Panc1 (cell line): ENCODE measurements at regions of chr12 and their contacts with region 1.

Region 1: DNA sequence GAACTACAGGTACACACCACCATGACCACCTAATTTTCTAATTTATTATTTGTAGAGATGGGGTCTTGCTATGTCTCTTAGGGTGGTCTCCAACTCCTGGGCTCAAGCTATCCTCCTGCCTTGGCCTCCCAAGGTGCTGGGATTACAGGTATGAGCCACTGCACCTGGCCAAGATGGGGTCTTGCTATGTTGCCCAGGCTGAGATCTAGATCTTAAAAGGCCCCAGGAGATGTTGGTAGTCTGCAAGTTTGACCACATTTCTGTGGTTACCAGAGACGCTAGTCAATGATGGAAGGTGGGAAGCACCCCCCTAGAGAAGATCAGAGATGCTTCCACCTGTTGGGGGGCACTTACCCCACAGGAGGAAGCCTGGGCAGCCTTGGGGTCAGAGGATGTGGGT is 34.7 kb downstream of the FOXN4 start:
- DNase-seq: no peak
- ATAC-seq: no peak
- H3K4me3 ChIP-seq: no peak overlapping the region
- H3K27ac ChIP-seq: no peak overlapping the region
- H3K4me1 ChIP-seq: no peaks in the 10 kb centered on the region
- H3K27me3 ChIP-seq: no peaks in the 10 kb centered on the region
- CTCF ChIP-seq: no peak

Region 2: DNA sequence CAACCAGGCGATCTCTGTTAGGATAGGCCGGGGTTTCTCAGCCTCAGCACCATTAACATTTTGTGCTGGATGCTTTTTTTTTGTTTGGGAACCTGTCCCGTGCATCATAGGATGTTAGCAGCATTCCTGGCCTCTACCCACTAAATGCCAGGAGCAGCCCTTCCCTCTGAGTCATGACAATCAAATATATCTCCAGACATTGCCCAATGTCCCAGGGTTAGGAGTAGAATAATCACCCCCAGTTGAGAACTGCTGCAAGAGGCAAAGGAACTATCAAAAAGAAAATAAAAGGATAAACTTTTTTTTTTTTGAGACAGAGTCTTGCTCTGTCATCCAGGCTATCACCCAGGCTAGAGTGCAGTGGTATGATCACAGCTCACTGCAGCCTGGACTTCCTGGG is 82.0 kb before region 1 on chr12:
- CTCF ChIA-PET with region 1: interaction called, 12 read pairs
- POLR2A ChIA-PET with region 1: no interaction called
- in situ Hi-C with region 1: no loop called
- intact Hi-C with region 1: no loop called
- DNase-seq: no peak
- ATAC-seq: no peak
- H3K4me3 ChIP-seq: no peak overlapping the region
- H3K27ac ChIP-seq: no peak overlapping the region
- H3K4me1 ChIP-seq: no peaks in the 10 kb centered on the region
- H3K27me3 ChIP-seq: no peaks in the 10 kb centered on the region
- CTCF ChIP-seq: no peak

Region 3: DNA sequence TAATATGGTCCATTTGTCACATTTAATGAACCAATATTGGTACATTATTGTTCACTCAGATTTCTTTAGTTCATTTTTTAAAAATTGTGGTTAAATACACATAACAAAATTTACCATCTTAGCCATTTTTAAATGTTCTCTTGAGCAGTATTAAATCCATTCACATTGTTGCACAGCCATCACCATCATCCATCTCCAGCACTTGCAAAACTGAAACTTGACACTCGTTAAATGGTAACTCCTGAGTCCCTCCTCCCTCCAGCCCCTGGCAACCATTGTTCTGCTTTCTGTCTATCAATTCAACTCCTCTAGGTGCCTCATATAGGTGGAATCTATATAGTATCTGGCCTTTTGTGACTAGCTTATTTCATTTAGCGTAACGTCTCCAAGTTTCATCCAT is 71.6 kb before region 1 on chr12:
- CTCF ChIA-PET with region 1: no interaction called
- POLR2A ChIA-PET with region 1: no interaction called
- in situ Hi-C with region 1: no loop called
- intact Hi-C with region 1: no loop called
- DNase-seq: no peak
- ATAC-seq: no peak
- H3K4me3 ChIP-seq: no peak overlapping the region
- H3K27ac ChIP-seq: no peak overlapping the region
- H3K4me1 ChIP-seq: no peaks in the 10 kb centered on the region
- H3K27me3 ChIP-seq: no peaks in the 10 kb centered on the region
- CTCF ChIP-seq: no peak

Region 4: GRCh38 chr12:109291521-109292341 is 17.4 kb after region 1 on chr12:
- CTCF ChIA-PET with region 1: no interaction called
- POLR2A ChIA-PET with region 1: no interaction called
- in situ Hi-C with region 1: no loop called
- intact Hi-C with region 1: no loop called
- DNase-seq: no peak
- ATAC-seq: peak; percentile 43
- H3K4me3 ChIP-seq: no peak overlapping the region
- H3K27ac ChIP-seq: no peak overlapping the region
- H3K4me1 ChIP-seq: peaks cover 3% of the 10 kb centered on the region; the same call in 1 of the 2 replicates
- H3K27me3 ChIP-seq: no peaks in the 10 kb centered on the region
- CTCF ChIP-seq: no peak

Region 5: GRCh38 chr12:109302358-109302757 is 28.0 kb after region 1 on chr12:
- CTCF ChIA-PET with region 1: no interaction called
- POLR2A ChIA-PET with region 1: no interaction called
- in situ Hi-C with region 1: no loop called
- intact Hi-C with region 1: no loop called
- DNase-seq: no peak
- ATAC-seq: peak; percentile 44; the same call in 1 of the 2 replicates
- H3K4me3 ChIP-seq: no peak overlapping the region
- H3K27ac ChIP-seq: no peak overlapping the region
- H3K4me1 ChIP-seq: no peaks in the 10 kb centered on the region
- H3K27me3 ChIP-seq: peaks cover 12% of the 10 kb centered on the region
- CTCF ChIP-seq: no peak

Region 6: DNA sequence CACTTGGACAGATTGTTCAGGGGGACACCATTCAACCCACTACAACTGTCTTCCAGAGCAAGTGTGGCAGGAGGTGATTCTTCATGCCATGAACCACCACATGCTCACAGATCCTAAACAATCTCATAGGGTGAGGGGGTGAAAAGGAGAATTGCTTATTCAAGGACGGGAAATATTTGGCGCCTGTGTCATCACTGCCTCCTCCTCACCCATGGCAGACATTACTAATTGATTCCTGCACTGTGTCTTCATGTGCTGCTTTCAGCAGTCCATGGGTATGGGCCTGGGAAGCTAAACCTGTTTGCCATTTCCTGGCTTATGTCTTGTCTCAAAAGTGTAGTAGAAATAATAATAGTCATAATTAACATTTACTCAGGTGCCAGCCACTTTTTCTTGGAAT is 267.6 kb after region 1 on chr12:
- CTCF ChIA-PET with region 1: no interaction called
- POLR2A ChIA-PET with region 1: no interaction called
- in situ Hi-C with region 1: no loop called
- intact Hi-C with region 1: no loop called
- DNase-seq: no peak
- ATAC-seq: no peak
- H3K4me3 ChIP-seq: no peak overlapping the region
- H3K27ac ChIP-seq: no peak overlapping the region
- H3K4me1 ChIP-seq: no peaks in the 10 kb centered on the region
- H3K27me3 ChIP-seq: no peaks in the 10 kb centered on the region
- CTCF ChIP-seq: no peak